A673 (cell line): ENCODE measurements at regions of chr17 and their contacts with region 1.

Region 1: DNA sequence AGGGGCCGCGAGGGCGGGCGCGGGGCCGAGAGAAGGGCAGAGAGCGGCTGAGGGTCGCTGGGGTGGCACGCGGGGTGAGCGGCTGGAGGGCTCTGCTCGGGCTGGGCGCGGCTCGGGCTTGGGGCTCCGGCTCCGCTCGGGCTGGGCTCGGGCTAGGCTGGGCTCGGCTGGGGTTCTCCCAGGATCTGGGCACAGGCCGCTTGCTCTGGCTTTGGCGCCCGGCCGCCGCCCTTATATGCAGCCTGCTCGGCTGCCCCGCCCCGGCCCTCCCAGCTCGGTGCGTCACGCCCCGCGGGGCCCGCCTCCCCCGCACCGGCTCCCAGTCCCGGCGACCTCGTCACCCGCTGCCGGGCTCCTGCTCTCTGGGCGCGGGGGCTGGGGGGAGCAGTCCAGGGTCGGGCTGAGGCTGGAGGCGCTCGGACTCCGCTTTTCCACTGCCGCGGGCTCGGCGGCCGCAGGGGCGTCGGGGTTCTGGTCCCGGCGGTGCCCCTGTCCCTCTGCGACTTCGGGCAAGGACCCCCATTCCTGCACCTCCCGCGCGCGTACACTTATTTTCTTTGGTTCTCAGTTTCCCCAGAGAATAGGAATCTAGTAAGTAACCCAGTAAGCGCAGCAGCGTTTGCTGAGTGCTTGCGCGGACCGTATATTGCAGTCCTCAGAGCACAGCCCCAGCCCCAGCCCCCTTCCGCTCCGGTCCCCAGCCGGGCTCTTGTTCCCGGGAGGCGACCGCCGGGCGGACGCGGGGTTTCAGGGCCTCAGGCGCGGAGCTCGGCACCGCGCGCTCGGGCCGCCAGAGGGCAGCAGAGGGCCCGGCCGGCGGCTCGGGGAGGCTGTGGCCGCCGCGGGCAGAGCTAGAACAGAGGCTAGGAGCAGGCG is at the start of gene RASD1:
- DNase-seq: peak; percentile 88
- H3K4me3 ChIP-seq: peak within 1 kb of the TSS; percentile 71
- H3K27ac ChIP-seq: peak within 1 kb of the TSS; percentile 38
- H3K4me1 ChIP-seq: peaks cover 36% of the 10 kb centered on the region
- H3K27me3 ChIP-seq: peaks cover 13% of the 10 kb centered on the region
- CTCF ChIP-seq: peak; percentile 67
- total RNA-seq, gene RASD1: 0.21 and 0.24 TPM in 2 replicates

Region 2: GRCh38 chr17:17356149-17356930 is 140.1 kb before region 1 on chr17:
- CTCF ChIA-PET with region 1: no interaction called
- POLR2A ChIA-PET with region 1: no interaction called
- intact Hi-C with region 1: loop called (anchors 2 kb)
- DNase-seq: peak; percentile 87
- H3K4me3 ChIP-seq: no peak overlapping the region
- H3K27ac ChIP-seq: no peak overlapping the region
- H3K4me1 ChIP-seq: no peaks in the 10 kb centered on the region
- H3K27me3 ChIP-seq: no peaks in the 10 kb centered on the region
- CTCF ChIP-seq: peak; percentile 97

Region 3: GRCh38 chr17:17613708-17614114 is 117.3 kb after region 1 on chr17:
- CTCF ChIA-PET with region 1: interaction called, 7 read pairs
- POLR2A ChIA-PET with region 1: no interaction called
- intact Hi-C with region 1: loop called (anchors 1 kb)
- DNase-seq: peak; percentile 82
- H3K4me3 ChIP-seq: no peak overlapping the region
- H3K27ac ChIP-seq: no peak overlapping the region
- H3K4me1 ChIP-seq: no peaks in the 10 kb centered on the region
- H3K27me3 ChIP-seq: no peaks in the 10 kb centered on the region
- CTCF ChIP-seq: peak; percentile 76

Region 4: DNA sequence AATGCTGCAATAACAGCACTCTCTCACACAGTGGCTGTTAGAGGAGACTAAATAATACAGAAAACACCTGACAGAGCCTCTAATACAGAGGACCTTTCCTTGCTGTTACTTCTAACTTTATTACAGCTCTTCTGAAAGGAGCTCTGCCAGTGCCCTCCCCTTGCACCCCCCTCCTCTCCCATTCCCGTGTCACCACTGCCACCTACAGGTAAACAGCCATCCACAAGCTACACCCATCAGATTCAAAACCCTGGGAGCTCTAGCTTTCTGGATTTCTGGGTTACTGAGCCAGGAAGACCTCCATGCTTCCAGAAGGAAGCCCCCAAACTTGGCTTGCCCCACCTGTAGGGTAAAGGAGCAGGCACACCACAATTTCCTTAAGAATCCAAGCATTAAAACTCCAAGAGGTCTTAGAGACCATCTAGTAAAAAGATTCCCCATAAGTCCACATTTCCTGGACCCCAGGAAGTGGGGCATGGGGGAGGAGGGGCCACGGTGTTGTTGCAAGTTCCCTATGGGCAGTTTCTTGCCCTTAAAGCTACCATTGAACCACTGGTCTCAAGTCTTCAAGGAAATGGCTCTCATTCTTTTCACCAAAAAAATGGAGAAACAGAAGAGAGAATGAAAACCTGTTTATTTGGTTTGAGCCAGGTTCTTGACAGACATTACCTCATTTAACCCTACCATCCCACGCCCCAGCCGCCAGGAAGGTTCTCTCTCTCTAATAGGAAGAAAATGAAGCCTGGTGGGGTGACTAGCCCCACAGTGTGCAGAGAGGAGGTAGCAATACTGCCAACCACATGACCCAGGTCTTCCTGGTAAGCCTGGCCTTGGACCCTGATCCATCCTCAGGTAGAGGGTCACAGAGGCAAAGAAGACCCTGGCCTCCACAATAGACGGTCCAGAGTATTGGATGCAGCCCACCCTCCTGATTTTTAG is 423.0 kb after region 1 on chr17:
- CTCF ChIA-PET with region 1: interaction called, 7 read pairs
- POLR2A ChIA-PET with region 1: no interaction called
- intact Hi-C with region 1: loop called (anchors 5 kb)
- DNase-seq: peak; percentile 91
- H3K4me3 ChIP-seq: no peak overlapping the region
- H3K27ac ChIP-seq: peak overlapping the region; percentile 14
- H3K4me1 ChIP-seq: peaks cover 33% of the 10 kb centered on the region
- H3K27me3 ChIP-seq: no peaks in the 10 kb centered on the region
- CTCF ChIP-seq: peak; percentile 95

Region 5: GRCh38 chr17:18038861-18039534 is 542.6 kb after region 1 on chr17 and contains the starts of genes ATPAF2 and GID4:
- CTCF ChIA-PET with region 1: no interaction called
- POLR2A ChIA-PET with region 1: no interaction called
- intact Hi-C with region 1: loop called (anchors 10 kb)
- DNase-seq: peak; percentile 100
- H3K4me3 ChIP-seq: peak within 1 kb of the TSS; percentile 80
- H3K27ac ChIP-seq: peak within 1 kb of the TSS; percentile 80
- H3K4me1 ChIP-seq: no peaks in the 10 kb centered on the region
- H3K27me3 ChIP-seq: no peaks in the 10 kb centered on the region
- CTCF ChIP-seq: no peak
- total RNA-seq, gene ATPAF2: 30.5 and 33.7 TPM in 2 replicates
- total RNA-seq, gene GID4: 14.0 and 16.5 TPM in 2 replicates